ENCODE measurements at regions of chr17 and their contacts with region 1.

Region 1: GRCh38 chr17:73371285-73371684 is 59.5 kb upstream of the CDC42EP4 start:
- DNase-seq: no peak
- ATAC-seq: no peak
- H3K4me3 Mint-ChIP-seq: no peak overlapping the region
- H3K27ac Mint-ChIP-seq: no peak overlapping the region
- H3K4me1 Mint-ChIP-seq: no peaks in the 10 kb centered on the region
- H3K27me3 Mint-ChIP-seq: no peaks in the 10 kb centered on the region
- CTCF ChIP-seq: no peak

Region 2: DNA sequence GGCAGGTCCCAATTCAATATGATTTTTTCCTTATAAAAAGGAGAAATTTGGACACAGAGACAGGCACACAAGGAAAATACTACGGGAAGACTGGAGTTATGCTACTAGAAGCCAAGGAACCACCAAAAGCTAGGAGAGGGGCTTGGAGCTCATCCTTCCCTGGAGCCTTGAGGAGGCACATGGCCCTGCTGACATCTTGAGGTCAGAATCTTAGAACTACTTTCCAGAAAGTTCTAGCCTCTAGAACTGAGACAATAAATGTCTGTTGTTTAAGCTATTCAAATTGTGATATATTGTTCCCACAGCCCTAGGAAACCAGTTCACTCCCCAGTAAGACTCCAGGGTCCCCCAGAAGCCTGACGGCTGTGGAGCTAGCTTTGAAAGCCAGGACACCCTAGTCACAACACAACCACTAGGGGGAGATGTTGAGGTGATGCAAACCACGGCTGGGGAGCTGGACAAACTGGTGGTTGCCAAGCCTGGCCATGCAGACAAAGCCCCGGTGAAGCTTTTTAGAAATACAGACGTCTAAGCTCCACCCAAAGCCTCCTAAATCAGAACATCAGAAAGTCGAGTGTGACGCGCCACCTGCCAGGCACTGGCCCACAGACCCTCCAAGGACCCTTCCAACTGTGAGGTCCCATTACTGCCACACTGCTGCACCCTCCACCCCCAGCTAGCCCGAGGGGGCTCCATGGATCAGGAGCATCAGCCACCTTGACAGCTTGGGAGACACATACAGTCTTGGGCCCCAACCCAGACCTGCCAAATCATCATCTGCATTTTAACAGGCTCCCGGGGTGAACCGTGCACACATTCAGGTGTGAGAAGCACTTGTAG is 385.2 kb before region 1 on chr17:
- CTCF ChIA-PET with region 1: interaction called, 15 read pairs
- POLR2A ChIA-PET with region 1: no interaction called
- intact Hi-C with region 1: loop called (anchors 10 kb)
- DNase-seq: peak; percentile 68
- ATAC-seq: peak; percentile 77
- H3K4me3 Mint-ChIP-seq: no peak overlapping the region
- H3K27ac Mint-ChIP-seq: no peak overlapping the region
- H3K4me1 Mint-ChIP-seq: peaks cover 2% of the 10 kb centered on the region
- H3K27me3 Mint-ChIP-seq: no peaks in the 10 kb centered on the region
- CTCF ChIP-seq: peak; percentile 76

Region 3: GRCh38 chr17:73247726-73248125 is 123.6 kb before region 1 on chr17:
- CTCF ChIA-PET with region 1: interaction called, 157 read pairs
- POLR2A ChIA-PET with region 1: no interaction called
- intact Hi-C with region 1: no loop called
- DNase-seq: no peak
- ATAC-seq: no peak
- H3K4me3 Mint-ChIP-seq: no peak overlapping the region
- H3K27ac Mint-ChIP-seq: no peak overlapping the region
- H3K4me1 Mint-ChIP-seq: no peaks in the 10 kb centered on the region
- H3K27me3 Mint-ChIP-seq: no peaks in the 10 kb centered on the region
- CTCF ChIP-seq: no peak

Region 4: DNA sequence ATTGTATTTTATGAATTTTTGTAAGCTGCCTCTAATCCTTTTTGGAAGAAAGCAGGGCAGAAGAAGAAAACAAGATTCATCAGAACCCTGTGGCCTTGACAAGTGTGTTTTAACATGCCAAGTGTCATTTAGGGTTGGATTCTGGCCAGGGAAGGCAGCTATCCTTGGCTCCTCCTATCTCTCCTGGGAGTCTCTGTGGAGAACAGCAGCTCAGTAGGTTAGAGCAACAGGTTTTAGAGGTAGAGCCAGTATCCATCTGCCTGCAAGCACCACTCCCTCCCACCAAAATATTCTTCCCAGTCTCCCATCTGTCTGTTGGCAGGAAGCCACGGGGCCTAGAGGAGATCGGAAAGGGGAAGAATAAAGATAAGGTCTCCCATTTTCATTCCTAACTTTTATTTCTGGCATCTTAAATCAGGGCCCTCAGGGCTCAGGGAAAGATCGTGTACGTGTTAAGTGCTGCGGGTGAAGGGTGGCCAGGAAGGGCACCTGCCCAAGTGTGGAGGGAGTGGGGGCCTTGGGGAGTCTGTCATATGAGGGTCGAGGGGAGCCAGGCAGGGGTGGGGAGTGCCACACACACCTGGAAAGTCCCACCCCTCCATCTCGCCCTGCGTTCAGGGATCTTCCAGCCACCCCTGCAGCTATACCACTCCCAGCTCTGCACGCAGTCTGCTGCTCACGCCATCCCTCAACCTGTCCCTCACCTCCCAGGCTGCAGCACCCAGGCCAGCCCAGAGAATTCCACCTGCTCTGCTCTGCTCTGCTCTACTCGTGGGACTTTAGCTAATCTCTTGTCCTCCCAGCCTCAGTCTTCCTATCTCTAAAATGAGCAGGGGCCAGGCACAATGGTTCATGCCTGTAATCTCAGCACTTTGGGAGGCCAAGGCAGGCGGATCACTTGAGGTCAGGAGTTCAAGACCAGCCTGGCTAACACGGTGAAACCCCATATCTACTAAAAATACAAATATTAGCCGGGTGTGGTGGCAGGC is 92.5 kb before region 1 on chr17:
- CTCF ChIA-PET with region 1: interaction called, 14 read pairs
- POLR2A ChIA-PET with region 1: no interaction called
- intact Hi-C with region 1: no loop called
- DNase-seq: no peak
- ATAC-seq: no peak
- H3K4me3 Mint-ChIP-seq: no peak overlapping the region
- H3K27ac Mint-ChIP-seq: no peak overlapping the region
- H3K4me1 Mint-ChIP-seq: no peaks in the 10 kb centered on the region
- H3K27me3 Mint-ChIP-seq: no peaks in the 10 kb centered on the region
- CTCF ChIP-seq: no peak

Region 5: GRCh38 chr17:73311781-73312641 is 59.3 kb before region 1 on chr17 and contains the start of gene CDC42EP4:
- CTCF ChIA-PET with region 1: interaction called, 28 read pairs
- POLR2A ChIA-PET with region 1: interaction called, 3 read pairs
- intact Hi-C with region 1: no loop called
- DNase-seq: peak; percentile 85
- ATAC-seq: peak; percentile 93
- H3K4me3 Mint-ChIP-seq: peak within 1 kb of the TSS; percentile 79
- H3K27ac Mint-ChIP-seq: no peak within 1 kb of the TSS
- H3K4me1 Mint-ChIP-seq: peaks cover 11% of the 10 kb centered on the region
- H3K27me3 Mint-ChIP-seq: peaks cover 2% of the 10 kb centered on the region
- CTCF ChIP-seq: no peak
- total RNA-seq, gene CDC42EP4: 0.72 to 1.1 TPM

Region 6: DNA sequence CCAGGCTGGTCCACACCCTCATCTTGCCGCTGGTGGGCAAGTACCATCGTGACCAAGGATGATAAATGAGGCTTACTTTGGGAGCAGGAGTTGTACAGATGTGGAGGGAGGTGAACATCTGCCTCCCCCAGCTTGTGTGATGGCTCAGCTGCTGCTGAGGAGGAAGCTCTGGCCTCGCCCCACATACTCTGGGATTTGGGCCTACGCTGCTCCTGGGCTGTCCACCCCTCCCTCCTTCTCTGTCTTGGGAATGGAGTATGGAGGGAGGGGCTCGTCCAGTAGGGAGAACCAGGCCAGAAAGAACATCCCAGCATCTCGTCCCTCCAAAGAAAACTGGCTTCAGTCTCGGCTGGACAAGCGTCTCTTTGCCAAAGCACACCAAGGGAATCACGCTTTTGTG is 75.3 kb after region 1 on chr17:
- CTCF ChIA-PET with region 1: no interaction called
- POLR2A ChIA-PET with region 1: no interaction called
- intact Hi-C with region 1: no loop called
- DNase-seq: no peak
- ATAC-seq: no peak
- H3K4me3 Mint-ChIP-seq: no peak overlapping the region
- H3K27ac Mint-ChIP-seq: no peak overlapping the region
- H3K4me1 Mint-ChIP-seq: no peaks in the 10 kb centered on the region
- H3K27me3 Mint-ChIP-seq: no peaks in the 10 kb centered on the region
- CTCF ChIP-seq: no peak